ENCODE measurements at regions of chr7 and their contacts with region 1.

Region 1: DNA sequence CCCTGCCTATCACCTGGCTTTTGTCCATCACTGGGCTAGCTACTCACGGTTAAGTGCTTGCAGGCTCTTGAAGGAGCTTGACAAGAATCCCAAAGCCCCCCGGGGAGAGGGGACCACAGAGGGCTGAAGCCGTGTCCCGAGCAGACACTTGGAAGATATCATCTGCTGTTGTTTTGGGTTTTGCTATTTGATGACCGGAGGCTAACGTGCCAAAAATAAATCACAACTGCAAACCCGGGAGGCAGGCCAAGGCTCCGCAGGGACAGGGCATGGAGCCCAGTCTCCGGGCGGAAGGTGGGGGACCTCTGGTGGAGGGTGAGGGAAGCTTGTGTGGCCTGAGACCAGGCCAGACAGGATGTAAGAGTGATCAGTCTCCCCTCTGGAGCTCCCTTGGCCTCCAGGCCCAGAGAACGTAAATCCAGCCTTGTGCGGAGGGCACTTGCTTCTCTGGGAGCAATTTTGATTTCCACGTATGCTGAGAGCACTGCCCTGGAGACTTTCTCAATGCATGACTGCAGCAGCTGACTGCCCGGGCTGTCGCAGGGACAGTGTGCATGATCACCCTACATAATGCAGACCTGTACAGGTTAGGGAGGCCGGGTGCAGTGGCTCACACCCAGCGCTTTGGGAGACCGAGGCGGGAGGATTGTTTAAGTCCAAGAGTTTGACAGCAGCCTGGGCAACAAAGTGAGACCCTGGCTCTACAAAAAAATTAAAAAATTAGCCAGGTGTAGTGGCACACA is at the start of gene PHKG1:
- DNase-seq: peak; percentile 56 to 58
- ATAC-seq: peak; percentile 93 to 95
- H3K4me3 ChIP-seq: no peak within 1 kb of the TSS
- H3K27ac ChIP-seq: peak within 1 kb of the TSS in 1 of 2 experiments; percentile 29; a peak in 1 of 6 replicates
- H3K4me1 ChIP-seq: peaks cover 10% of the 10 kb centered on the region; the same call in 2 of the 3 replicates
- CTCF ChIP-seq: peak; percentile 56
- EP300 ChIP-seq: no peak
- POLR2A ChIP-seq: no peak
- RAD21 ChIP-seq: peak; percentile 32 to 60; a peak in 4 of 5 replicates
- polyA plus RNA-seq, gene PHKG1: 0.41 and 0.44 TPM in 2 replicates

Region 2: GRCh38 chr7:56079450-56080185 is 13.3 kb before region 1 on chr7:
- CTCF ChIA-PET with region 1: interaction called, 20 read pairs
- POLR2A ChIA-PET with region 1: no interaction called
- DNase-seq: peak in 1 of 2 experiments; percentile 40
- ATAC-seq: peak; percentile 53 to 73; a peak in 4 of 6 replicates
- H3K4me3 ChIP-seq: no peak overlapping the region
- H3K27ac ChIP-seq: no peak overlapping the region
- H3K4me1 ChIP-seq: peaks cover 7% of the 10 kb centered on the region; the same call in 1 of the 3 replicates
- CTCF ChIP-seq: no peak
- EP300 ChIP-seq: no peak
- POLR2A ChIP-seq: no peak
- RAD21 ChIP-seq: no peak